Caco-2 (cell line): ENCODE measurements at regions of chr3 and their contacts with region 1.

Region 1: DNA sequence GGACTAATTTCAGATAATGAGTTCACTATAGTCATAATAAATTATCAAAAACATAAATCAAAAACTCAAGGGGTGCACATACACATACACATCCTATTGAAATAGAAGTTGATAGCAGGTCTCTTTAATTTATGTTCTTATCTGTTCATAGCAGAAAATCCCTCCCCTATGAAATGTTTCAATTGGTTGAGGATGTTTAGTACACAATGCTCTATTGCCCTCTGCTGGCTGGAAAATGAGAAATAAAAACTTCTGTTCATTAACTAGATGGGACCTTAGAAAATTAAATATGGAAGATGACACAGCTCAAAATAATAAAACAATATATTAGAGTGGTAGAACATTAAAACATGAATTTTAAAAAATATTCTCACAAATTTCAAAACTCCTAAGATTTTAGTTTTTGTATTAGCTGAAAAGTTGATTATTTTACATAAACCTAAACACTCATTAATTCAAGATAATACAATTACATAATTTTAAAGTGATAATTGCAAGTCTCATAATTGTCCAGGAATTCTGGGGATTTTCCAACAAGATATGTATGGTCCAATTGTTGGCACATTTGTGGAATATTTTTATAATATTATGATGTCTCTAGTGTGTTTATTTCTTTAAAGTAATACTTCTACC is 735.0 kb downstream of the ROBO1 start:
- DNase-seq: peak in 1 of 2 experiments; percentile 43
- H3K4me3 ChIP-seq: no peak overlapping the region
- H3K4me3 Mint-ChIP-seq: no peak overlapping the region
- H3K27ac Mint-ChIP-seq: no peak overlapping the region
- H3K4me1 ChIP-seq: no peaks in the 10 kb centered on the region
- H3K4me1 Mint-ChIP-seq: no peaks in the 10 kb centered on the region
- H3K27me3 ChIP-seq: no peaks in the 10 kb centered on the region
- H3K27me3 Mint-ChIP-seq: no peaks in the 10 kb centered on the region
- CTCF ChIP-seq: peak; percentile 45 to 56

Region 2: GRCh38 chr3:78659386-78659987 is 373.3 kb before region 1 on chr3:
- CTCF ChIA-PET with region 1: interaction called, 3 read pairs
- POLR2A ChIA-PET with region 1: no interaction called
- intact Hi-C with region 1: loop called (anchors 1 kb)
- DNase-seq: peak in 1 of 2 experiments; percentile 30
- H3K4me3 ChIP-seq: no peak overlapping the region
- H3K4me3 Mint-ChIP-seq: no peak overlapping the region
- H3K27ac Mint-ChIP-seq: no peak overlapping the region
- H3K4me1 ChIP-seq: no peaks in the 10 kb centered on the region
- H3K4me1 Mint-ChIP-seq: no peaks in the 10 kb centered on the region
- H3K27me3 ChIP-seq: no peaks in the 10 kb centered on the region
- H3K27me3 Mint-ChIP-seq: peaks cover 5% of the 10 kb centered on the region
- CTCF ChIP-seq: peak; percentile 46 to 78

Region 3: GRCh38 chr3:78857494-78858111 is 175.2 kb before region 1 on chr3:
- CTCF ChIA-PET with region 1: no interaction called
- POLR2A ChIA-PET with region 1: no interaction called
- intact Hi-C with region 1: loop called (anchors 2 kb)
- DNase-seq: peak in 1 of 2 experiments; percentile 11
- H3K4me3 ChIP-seq: no peak overlapping the region
- H3K4me3 Mint-ChIP-seq: no peak overlapping the region
- H3K27ac Mint-ChIP-seq: no peak overlapping the region
- H3K4me1 ChIP-seq: no peaks in the 10 kb centered on the region
- H3K4me1 Mint-ChIP-seq: no peaks in the 10 kb centered on the region
- H3K27me3 ChIP-seq: no peaks in the 10 kb centered on the region
- H3K27me3 Mint-ChIP-seq: no peaks in the 10 kb centered on the region
- CTCF ChIP-seq: no peak

Region 4: DNA sequence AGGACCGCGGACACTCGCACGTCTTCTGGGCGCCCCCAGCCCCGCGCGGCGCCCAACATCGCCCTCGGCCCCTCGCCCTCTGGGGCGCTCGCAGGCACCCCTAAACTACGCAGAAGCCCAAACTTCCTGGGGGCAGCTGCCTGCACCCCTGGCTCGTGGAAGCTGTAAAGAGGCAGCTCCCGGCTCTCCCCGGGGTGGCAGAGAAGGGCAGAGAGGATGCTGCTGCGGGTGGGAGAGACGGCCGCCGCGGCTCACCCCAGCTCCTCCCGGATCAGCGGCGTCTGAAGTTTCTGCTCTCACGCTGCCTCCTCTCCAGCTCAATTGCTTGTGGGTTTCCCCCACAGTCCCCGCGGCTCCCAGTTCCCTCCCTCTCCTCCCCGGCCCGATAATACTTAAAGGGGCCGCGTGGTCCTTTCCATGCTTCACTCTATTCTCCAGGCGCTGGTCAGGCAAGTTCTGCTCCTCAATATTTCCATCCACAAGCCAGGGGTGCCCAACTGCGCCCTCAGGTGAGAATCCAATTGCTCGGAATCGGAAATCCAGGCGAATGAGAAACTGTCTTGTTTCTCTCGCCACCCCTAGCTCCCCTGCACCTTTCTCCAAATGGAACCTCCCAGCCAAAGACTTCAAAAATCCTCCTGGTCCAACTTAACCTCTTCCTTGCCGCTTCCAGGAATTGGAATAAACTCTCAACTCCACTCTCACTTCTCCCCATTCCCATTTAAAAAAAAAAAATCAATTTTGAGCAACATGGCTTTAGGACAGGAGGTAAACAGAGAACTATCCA is 13.5 kb before region 1 on chr3:
- CTCF ChIA-PET with region 1: no interaction called
- POLR2A ChIA-PET with region 1: no interaction called
- intact Hi-C with region 1: loop called (anchors 1 kb)
- DNase-seq: peak; percentile 64 to 82
- H3K4me3 ChIP-seq: peak overlapping the region; percentile 40
- H3K4me3 Mint-ChIP-seq: no peak overlapping the region
- H3K27ac Mint-ChIP-seq: peak overlapping the region; percentile 61
- H3K4me1 ChIP-seq: peaks cover 5% of the 10 kb centered on the region; the same call in 1 of the 2 replicates
- H3K4me1 Mint-ChIP-seq: no peaks in the 10 kb centered on the region
- H3K27me3 ChIP-seq: no peaks in the 10 kb centered on the region
- H3K27me3 Mint-ChIP-seq: no peaks in the 10 kb centered on the region
- CTCF ChIP-seq: no peak

Region 5: DNA sequence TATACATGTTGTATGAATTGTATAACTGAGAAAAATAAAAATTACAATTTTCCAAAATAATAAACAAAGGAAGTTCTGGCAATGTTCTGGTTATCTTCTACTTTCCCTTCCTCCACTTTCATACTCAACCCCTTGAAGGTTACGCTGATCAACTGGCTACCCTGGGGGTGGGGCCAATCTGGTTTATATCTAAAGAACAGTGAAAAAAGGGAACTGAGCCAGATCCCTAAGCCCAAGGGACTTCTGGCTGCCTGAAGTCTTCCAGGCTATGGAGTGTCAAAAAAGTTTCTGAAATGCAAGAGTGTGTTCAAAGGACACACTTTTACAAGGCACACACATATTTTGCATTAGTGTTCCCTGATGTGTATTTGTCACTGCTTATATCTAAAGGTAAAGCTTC is 143.1 kb after region 1 on chr3:
- CTCF ChIA-PET with region 1: no interaction called
- POLR2A ChIA-PET with region 1: no interaction called
- intact Hi-C with region 1: no loop called
- DNase-seq: no peak
- H3K4me3 ChIP-seq: no peak overlapping the region
- H3K4me3 Mint-ChIP-seq: no peak overlapping the region
- H3K27ac Mint-ChIP-seq: no peak overlapping the region
- H3K4me1 ChIP-seq: no peaks in the 10 kb centered on the region
- H3K4me1 Mint-ChIP-seq: no peaks in the 10 kb centered on the region
- H3K27me3 ChIP-seq: no peaks in the 10 kb centered on the region
- H3K27me3 Mint-ChIP-seq: no peaks in the 10 kb centered on the region
- CTCF ChIP-seq: no peak